ENCODE measurements at regions of chr10 and their contacts with region 1.

Region 1: GRCh38 chr10:95350219-95350829 is 59.5 kb upstream of the PDLIM1 start:
- DNase-seq: no peak
- ATAC-seq: peak; percentile 68

Region 2: GRCh38 chr10:95675403-95676112 is 325.2 kb after region 1 on chr10:
- intact Hi-C with region 1: loop called (anchors 10 kb)
- DNase-seq: no peak
- ATAC-seq: no peak

Measured in Right ventricle myocardium inferior (tissue), 1 donor.